ENCODE measurements at regions of chr16 and their contacts with region 1.

Region 1: DNA sequence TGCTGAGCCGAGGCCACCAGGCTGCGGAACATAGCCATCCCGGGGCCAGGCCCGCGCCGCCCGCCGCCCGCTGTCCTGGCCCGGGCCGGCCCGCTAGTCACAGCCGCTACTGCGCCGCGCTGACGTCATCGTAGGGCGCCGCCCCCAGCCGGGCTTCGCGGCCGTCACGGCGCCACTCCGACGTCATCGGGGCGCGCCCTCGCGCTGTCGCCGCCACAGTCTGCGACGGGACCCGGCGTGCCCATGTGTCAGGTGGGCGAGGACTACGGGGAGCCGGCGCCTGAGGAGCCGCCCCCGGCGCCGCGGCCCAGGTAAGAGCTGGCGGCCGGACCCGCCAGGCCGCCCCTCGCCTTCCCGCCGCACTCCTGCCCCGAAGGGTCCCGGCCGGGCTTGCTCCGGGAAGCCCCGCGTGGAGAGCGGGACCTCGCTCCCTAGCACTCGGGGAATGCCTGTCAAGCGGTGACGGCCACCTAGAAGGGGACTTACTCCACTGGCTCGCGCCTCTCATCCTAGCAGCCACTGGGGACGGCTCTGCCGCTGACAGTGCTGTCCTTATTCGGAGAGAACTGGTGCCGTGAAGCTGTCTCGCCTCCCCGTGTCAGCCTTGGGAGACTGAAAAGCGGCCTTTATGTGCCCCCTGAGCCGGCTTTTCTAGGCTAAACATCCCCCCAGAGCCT is at the starts of genes CTU2 and RNF166:
- DNase-seq: peak; percentile 93
- ATAC-seq: peak; percentile 62
- H3K4me3 Mint-ChIP-seq: peak within 1 kb of the TSS; percentile 94
- H3K27ac Mint-ChIP-seq: peak within 1 kb of the TSS; percentile 92
- H3K4me1 Mint-ChIP-seq: peaks cover 34% of the 10 kb centered on the region
- H3K27me3 Mint-ChIP-seq: no peaks in the 10 kb centered on the region
- CTCF ChIP-seq: no peak
- total RNA-seq, gene CTU2: 37.1 to 37.8 TPM
- total RNA-seq, gene RNF166: 80.7 to 82.4 TPM

Region 2: DNA sequence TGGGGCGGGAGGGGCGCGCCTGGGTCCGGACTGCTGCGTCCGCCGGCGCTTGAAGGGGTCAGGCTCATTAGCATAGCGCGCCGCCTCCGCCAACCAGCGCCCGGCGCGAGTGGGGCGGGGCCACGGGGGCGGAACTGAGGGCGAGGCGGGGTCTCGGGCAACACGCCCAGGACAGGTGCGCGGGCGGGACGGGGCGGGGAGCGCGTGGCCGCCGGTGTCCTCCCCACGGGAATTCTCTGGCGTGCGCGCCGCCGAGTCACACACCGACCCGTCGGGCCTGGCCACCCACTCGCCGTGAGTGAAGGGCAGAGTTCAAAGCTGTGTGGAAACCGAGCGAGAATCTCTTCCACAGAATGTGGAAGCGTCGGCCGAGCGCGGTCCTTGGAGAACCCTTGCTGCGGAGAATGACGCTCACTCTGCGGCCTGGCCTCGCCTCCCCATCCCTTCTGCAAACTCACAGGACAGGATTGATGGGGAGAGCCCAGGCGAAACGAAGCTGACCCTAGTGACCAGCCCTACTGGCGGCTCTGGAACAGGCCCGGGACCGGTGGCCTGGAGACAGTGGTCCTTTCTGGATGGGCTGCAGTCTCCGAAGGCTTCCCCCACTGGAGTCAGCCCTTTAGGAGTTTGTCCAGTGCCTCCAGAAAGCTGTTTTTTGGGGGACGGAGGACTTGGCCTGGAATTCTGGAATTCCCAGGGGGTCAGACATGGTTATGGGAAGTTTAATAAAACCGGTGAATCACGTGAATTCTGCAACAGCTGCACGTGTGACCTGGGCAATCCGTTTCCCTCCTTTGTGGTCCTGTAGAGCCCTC is 19.8 kb before region 1 on chr16 and contains the start of gene SNAI3:
- CTCF ChIA-PET with region 1: interaction called, 16 read pairs
- POLR2A ChIA-PET with region 1: interaction called, 61 read pairs
- intact Hi-C with region 1: no loop called
- DNase-seq: peak; percentile 87
- ATAC-seq: peak; percentile 71
- H3K4me3 Mint-ChIP-seq: peak within 1 kb of the TSS; percentile 73
- H3K27ac Mint-ChIP-seq: peak within 1 kb of the TSS; percentile 34
- H3K4me1 Mint-ChIP-seq: peaks cover 39% of the 10 kb centered on the region
- H3K27me3 Mint-ChIP-seq: no peaks in the 10 kb centered on the region
- CTCF ChIP-seq: no peak
- total RNA-seq, gene SNAI3: 5.2 to 5.3 TPM

Region 3: GRCh38 chr16:88691924-88692560 is 14.4 kb before region 1 on chr16:
- CTCF ChIA-PET with region 1: interaction called, 4 read pairs
- POLR2A ChIA-PET with region 1: interaction called, 61 read pairs
- intact Hi-C with region 1: no loop called
- DNase-seq: peak; percentile 47
- ATAC-seq: peak; percentile 34
- H3K4me3 Mint-ChIP-seq: no peak overlapping the region
- H3K27ac Mint-ChIP-seq: peak overlapping the region; percentile 66
- H3K4me1 Mint-ChIP-seq: peaks cover 29% of the 10 kb centered on the region
- H3K27me3 Mint-ChIP-seq: no peaks in the 10 kb centered on the region
- CTCF ChIP-seq: no peak

Region 4: DNA sequence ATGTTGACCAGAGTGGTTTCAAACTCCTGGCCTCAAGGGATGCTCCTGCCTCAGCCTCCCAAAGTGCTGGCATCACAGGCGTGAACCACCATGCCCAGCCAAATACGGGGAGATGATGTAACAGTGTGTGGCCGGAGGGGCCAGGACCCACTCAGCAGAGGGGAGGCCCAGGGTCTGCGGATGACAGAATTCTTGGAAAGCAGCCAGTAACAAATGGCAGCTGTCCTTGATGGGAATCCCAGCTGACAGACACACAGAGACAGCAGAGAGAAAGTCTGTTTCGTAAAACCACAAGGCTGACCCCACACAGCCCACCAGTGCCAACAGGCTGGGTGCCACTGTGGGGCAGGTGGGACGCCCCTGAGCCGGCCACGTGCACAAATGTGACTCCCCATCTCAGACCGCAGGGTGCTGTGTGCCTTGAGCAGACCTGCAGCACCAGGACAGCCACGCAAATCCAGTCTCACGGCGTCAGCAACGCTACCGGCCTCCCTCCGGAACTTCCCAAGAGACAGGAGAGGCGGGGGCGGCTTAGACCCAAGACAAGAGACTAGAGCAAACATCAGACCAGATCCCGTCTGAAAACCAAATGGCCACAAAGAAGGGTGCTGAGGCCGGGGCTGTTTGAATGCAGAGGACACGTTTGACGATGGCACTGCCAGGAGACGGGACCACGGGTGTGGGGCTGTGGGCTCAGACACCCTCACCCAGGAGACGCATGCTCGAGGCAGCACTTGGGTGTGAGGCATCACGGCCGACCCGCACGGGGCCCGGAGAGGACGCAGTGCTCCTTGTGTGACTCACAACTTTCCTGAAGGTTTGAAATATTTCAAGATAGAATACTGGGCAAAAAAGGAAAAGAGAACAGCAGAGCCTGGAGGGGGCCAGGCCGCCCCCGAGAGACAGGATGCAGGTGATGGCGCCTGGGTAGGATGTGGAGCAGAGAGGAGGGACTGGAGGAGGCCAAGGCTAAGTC is 24.5 kb after region 1 on chr16:
- CTCF ChIA-PET with region 1: no interaction called
- POLR2A ChIA-PET with region 1: no interaction called
- intact Hi-C with region 1: no loop called
- DNase-seq: no peak
- ATAC-seq: no peak
- H3K4me3 Mint-ChIP-seq: no peak overlapping the region
- H3K27ac Mint-ChIP-seq: no peak overlapping the region
- H3K4me1 Mint-ChIP-seq: no peaks in the 10 kb centered on the region
- H3K27me3 Mint-ChIP-seq: no peaks in the 10 kb centered on the region
- CTCF ChIP-seq: no peak

Measured in activated CD8-positive, alpha-beta T cell treated with anti-CD3 and anti-CD28 coated beads for 36 hours (primary cell).